ENCODE measurements at regions of chr11 and their contacts with region 1.

Region 1: GRCh38 chr11:46392421-46393230 is 1.1 kb upstream of the CHRM4 start:
- DNase-seq: peak in 1 of 2 experiments; percentile 97
- H3K4me3 ChIP-seq: peak overlapping the region; percentile 26 to 62 (median 40)
- H3K27ac ChIP-seq: no peak overlapping the region
- H3K4me1 ChIP-seq: peaks cover 3 to 17% (median 15%) of the 10 kb centered on the region in 4 experiments
- H3K27me3 ChIP-seq: peaks cover 19 to 43% (median 37%) of the 10 kb centered on the region in 4 experiments
- CTCF ChIP-seq: 0 out of 4 replicates have a peak, but pooled peaks of 1 of the 3 experiments have one; percentile 3
- EP300 ChIP-seq: peak in 1 of 2 experiments; percentile 34; a peak in 1 of 3 replicates
- POLR2A ChIP-seq: peak in 1 of 2 experiments; percentile 24; a peak in 1 of 3 replicates
- RAD21 ChIP-seq: peak in 1 of 2 experiments; percentile 23; a peak in 1 of 4 replicates

Region 2: DNA sequence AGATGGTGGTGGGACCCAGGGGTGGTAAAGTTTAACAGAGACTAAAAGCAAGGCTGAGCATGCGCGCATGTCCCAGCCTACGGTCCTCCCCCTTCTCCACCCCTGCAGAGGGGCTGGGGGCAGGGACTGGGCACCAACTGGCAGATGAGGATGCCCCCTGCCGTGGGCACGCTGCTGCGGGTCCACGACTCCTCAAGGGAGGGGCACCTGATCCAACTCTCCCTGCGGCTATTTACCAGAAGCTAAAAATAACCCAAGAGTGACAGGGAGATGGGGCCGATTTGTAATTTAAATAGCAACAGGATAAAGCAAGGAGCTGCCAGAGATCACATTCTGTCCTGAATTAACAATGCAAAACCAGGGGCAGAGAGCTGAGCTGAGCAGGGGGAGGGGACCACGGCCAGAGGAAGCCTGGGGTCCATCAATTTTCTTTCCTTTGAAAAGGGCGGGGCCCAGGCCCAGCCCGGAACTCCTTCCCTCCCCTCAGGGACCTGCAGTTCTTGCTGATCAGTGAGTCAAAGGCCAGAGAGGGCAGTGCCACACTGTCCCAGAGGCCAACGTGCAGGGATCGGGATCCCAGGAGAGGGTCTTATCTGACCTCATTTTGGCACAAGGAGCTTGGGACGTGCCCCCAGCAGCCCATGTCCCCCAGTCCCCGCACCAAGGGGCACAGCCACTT is 53.5 kb before region 1 on chr11:
- CTCF ChIA-PET with region 1: interaction called, 13 read pairs
- POLR2A ChIA-PET with region 1: interaction called, 3 read pairs
- DNase-seq: peak; percentile 87 to 91
- H3K4me3 ChIP-seq: peak overlapping the region in 3 of 4 experiments; percentile 10 to 46 (median 29); a peak in 7 of 8 replicates
- H3K27ac ChIP-seq: peak overlapping the region; percentile 77
- H3K4me1 ChIP-seq: peaks cover 34 to 59% (median 53%) of the 10 kb centered on the region in 4 experiments
- H3K27me3 ChIP-seq: peaks cover under 1 to 5% (median 5%) of the 10 kb centered on the region in 4 experiments; a peak in 6 of 7 replicates
- CTCF ChIP-seq: peak in 1 of 3 experiments; percentile 3; a peak in 1 of 4 replicates
- EP300 ChIP-seq: peak in 1 of 2 experiments; percentile 85; a peak in 1 of 3 replicates
- POLR2A ChIP-seq: peak in 1 of 2 experiments; percentile 39; a peak in 2 of 3 replicates
- RAD21 ChIP-seq: no peak; a peak in 1 of 4 replicates

Region 3: GRCh38 chr11:46367244-46367915 is 25.2 kb before region 1 on chr11:
- CTCF ChIA-PET with region 1: interaction called, 32 read pairs
- POLR2A ChIA-PET with region 1: no interaction called
- DNase-seq: peak in 1 of 2 experiments; percentile 95
- H3K4me3 ChIP-seq: no peak overlapping the region
- H3K27ac ChIP-seq: no peak overlapping the region; the same call in 1 of the 2 replicates
- H3K4me1 ChIP-seq: peaks cover 0 to 17% (median 8%) of the 10 kb centered on the region in 4 experiments; a peak in 5 of 7 replicates
- H3K27me3 ChIP-seq: no peaks in the 10 kb centered on the region
- CTCF ChIP-seq: peak in 2 of 3 experiments; percentile 75 to 90; a peak in 3 of 4 replicates
- EP300 ChIP-seq: no peak
- POLR2A ChIP-seq: no peak
- RAD21 ChIP-seq: peak; percentile 64 to 72

Region 4: DNA sequence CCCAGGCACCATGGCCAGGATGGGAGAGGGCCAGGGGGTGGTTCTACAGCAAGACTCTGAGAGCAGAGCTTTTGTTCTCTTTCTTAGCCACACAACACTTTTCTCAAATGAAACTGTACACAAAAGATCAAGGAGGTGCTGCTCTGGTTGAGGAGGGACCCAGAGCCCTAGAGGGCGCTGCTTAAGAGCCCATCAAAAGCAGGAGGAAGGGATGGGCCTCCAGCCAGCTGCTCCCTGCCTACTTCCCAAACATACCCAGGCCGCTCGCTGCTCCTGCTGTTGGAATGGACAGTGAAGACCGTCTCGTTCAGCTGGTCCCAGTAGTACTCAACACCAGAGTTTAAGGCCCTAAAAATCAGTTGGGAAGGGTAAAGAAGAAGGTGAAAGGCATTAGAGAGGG is 17.4 kb after region 1 on chr11:
- CTCF ChIA-PET with region 1: interaction called, 124 read pairs
- POLR2A ChIA-PET with region 1: interaction called, 4 read pairs
- DNase-seq: peak in 1 of 2 experiments; percentile 55
- H3K4me3 ChIP-seq: no peak overlapping the region
- H3K27ac ChIP-seq: no peak overlapping the region
- H3K4me1 ChIP-seq: peaks cover 0 to 2% (median 0%) of the 10 kb centered on the region in 4 experiments; a peak in 1 of 7 replicates
- H3K27me3 ChIP-seq: no peaks in the 10 kb centered on the region
- CTCF ChIP-seq: peak; percentile 62 to 81 (median 72)
- EP300 ChIP-seq: no peak
- POLR2A ChIP-seq: no peak
- RAD21 ChIP-seq: peak; percentile 72 to 76

Region 5: GRCh38 chr11:46529095-46529905 is 136.7 kb after region 1 on chr11:
- CTCF ChIA-PET with region 1: interaction called, 31 read pairs
- POLR2A ChIA-PET with region 1: no interaction called
- DNase-seq: peak; percentile 60 to 92
- H3K4me3 ChIP-seq: no peak overlapping the region
- H3K27ac ChIP-seq: no peak overlapping the region
- H3K4me1 ChIP-seq: peaks cover 0 to 6% (median 1%) of the 10 kb centered on the region in 4 experiments; a peak in 3 of 7 replicates
- H3K27me3 ChIP-seq: no peaks in the 10 kb centered on the region
- CTCF ChIP-seq: peak; percentile 89 to 98 (median 97)
- EP300 ChIP-seq: no peak
- POLR2A ChIP-seq: no peak
- RAD21 ChIP-seq: peak; percentile 67 to 73

Measured in H1 (cell line).